HepG2 (cell line): ENCODE measurements at regions of chr6 and their contacts with region 1.

Region 1: DNA sequence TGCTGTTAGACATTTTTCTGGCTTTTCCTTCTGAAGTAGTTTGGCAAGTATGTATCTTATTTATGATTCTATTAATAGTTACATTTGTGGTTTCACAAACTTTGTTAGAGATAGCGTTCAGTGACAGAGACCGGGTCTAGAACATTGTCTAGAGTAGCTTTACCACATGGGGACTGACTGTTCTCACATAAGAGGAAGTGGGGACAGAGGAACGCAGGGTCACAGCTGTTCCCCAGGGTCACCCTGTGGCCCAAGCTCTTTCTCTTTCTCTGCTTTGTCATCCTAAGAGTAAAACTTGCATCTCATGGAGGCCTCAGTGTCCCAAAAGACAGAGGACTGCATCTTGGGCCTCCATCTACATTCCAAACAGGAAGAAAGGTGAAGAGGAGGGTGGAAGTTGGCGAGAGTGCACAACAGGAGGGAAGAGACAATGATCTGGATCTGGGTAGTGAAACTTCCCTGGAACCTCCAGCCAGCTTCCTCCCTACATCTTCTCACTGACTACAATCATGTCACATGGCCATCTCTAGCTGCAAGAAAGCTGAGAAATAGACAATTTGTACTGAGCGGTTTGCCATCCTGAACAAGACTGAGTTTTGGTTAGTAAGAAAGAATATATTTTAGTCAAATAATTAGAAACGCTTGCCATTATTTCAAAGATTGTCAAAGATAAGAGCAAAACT is 645.8 kb upstream of the ARID1B start:
- DNase-seq: no peak
- ATAC-seq: no peak
- H3K4me3 ChIP-seq: no peak overlapping the region
- H3K27ac ChIP-seq: no peak overlapping the region
- H3K4me1 ChIP-seq: no peaks in the 10 kb centered on the region
- H3K27me3 ChIP-seq: peaks cover 0 to 18% of the 10 kb centered on the region in 2 experiments; a peak in 2 of 5 replicates
- CTCF ChIP-seq: no peak
- EP300 ChIP-seq: no peak
- POLR2A ChIP-seq: no peak
- RAD21 ChIP-seq: no peak

Region 2: DNA sequence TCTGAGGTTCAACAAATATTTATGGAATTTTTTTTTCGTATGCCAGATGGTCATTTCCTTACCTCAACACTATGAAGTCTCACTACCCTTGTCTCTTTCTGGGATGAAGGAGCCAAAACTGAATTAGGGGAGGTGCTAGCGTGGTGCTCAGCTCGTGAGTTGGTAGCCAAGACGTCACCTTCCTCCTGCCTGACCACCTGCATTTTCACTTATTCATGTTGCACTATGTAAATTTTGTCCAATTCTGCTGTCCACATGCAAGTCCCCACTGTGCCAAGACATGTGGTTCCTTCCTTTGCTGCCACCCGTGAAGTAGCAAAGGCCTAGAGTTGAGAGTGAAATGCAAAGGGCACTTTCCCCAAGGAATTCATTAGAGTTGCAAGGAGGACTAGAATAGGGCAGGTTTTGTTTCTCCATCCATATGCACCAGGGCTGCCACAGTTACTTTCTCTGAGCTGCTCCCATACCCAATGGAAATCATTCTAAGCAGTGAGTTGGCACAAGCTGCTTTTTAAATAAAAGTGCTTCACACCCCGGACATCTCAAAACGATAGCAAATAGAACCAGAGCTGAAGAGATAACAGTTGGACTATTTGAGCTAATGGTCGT is 84.4 kb before region 1 on chr6:
- CTCF ChIA-PET with region 1: no interaction called
- POLR2A ChIA-PET with region 1: no interaction called
- in situ Hi-C with region 1: no loop called
- intact Hi-C with region 1: no loop called
- DNase-seq: no peak
- ATAC-seq: no peak
- H3K4me3 ChIP-seq: no peak overlapping the region
- H3K27ac ChIP-seq: no peak overlapping the region
- H3K4me1 ChIP-seq: no peaks in the 10 kb centered on the region
- H3K27me3 ChIP-seq: no peaks in the 10 kb centered on the region
- CTCF ChIP-seq: no peak
- EP300 ChIP-seq: no peak
- POLR2A ChIP-seq: no peak
- RAD21 ChIP-seq: no peak

Region 3: GRCh38 chr6:156146891-156147290 is 15.5 kb after region 1 on chr6:
- CTCF ChIA-PET with region 1: no interaction called
- POLR2A ChIA-PET with region 1: no interaction called
- in situ Hi-C with region 1: no loop called
- intact Hi-C with region 1: no loop called
- DNase-seq: no peak
- ATAC-seq: no peak
- H3K4me3 ChIP-seq: no peak overlapping the region
- H3K27ac ChIP-seq: no peak overlapping the region
- H3K4me1 ChIP-seq: no peaks in the 10 kb centered on the region
- H3K27me3 ChIP-seq: no peaks in the 10 kb centered on the region; a peak in 1 of 5 replicates
- CTCF ChIP-seq: no peak
- EP300 ChIP-seq: no peak
- POLR2A ChIP-seq: no peak
- RAD21 ChIP-seq: no peak

Region 4: DNA sequence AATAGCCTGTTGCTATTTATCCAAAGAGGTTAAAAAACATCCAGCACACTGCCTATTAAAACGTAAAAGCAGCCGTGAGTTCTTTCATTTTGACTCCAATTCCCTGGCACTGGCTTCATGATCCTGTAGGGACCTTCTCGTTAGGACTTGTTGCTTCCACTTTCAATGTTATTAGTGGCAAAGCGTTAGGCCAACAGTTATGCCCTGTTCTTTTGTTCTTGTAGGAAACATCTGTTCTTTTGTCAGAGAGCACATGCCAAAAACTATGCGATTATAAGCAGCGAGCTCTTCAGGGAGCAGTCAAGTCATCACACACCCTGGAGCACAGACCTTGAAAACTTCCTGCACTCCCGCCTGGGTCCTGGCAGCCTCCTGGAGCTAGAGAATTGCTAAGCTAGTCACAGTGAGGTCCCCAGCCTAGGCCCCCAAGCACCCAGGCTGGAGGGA is 36.3 kb after region 1 on chr6:
- CTCF ChIA-PET with region 1: no interaction called
- POLR2A ChIA-PET with region 1: no interaction called
- in situ Hi-C with region 1: no loop called
- intact Hi-C with region 1: loop called (anchors 2 kb)
- DNase-seq: no peak
- ATAC-seq: no peak
- H3K4me3 ChIP-seq: no peak overlapping the region
- H3K27ac ChIP-seq: no peak overlapping the region
- H3K4me1 ChIP-seq: no peaks in the 10 kb centered on the region
- H3K27me3 ChIP-seq: peaks cover 0 to 15% of the 10 kb centered on the region in 2 experiments; a peak in 2 of 5 replicates
- CTCF ChIP-seq: no peak
- EP300 ChIP-seq: no peak
- POLR2A ChIP-seq: no peak
- RAD21 ChIP-seq: no peak

Region 5: GRCh38 chr6:156687789-156688619 is 556.6 kb after region 1 on chr6:
- CTCF ChIA-PET with region 1: no interaction called
- POLR2A ChIA-PET with region 1: no interaction called
- in situ Hi-C with region 1: no loop called
- intact Hi-C with region 1: no loop called
- DNase-seq: no peak
- ATAC-seq: peak; percentile 16
- H3K4me3 ChIP-seq: peak overlapping the region; percentile 39 to 75 (median 62)
- H3K27ac ChIP-seq: no peak overlapping the region
- H3K4me1 ChIP-seq: peaks cover 18% of the 10 kb centered on the region
- H3K27me3 ChIP-seq: peaks cover 0 to 26% of the 10 kb centered on the region in 2 experiments; a peak in 3 of 5 replicates
- CTCF ChIP-seq: no peak
- EP300 ChIP-seq: no peak
- POLR2A ChIP-seq: no peak
- RAD21 ChIP-seq: no peak